ENCODE measurements at regions of chr12 and their contacts with region 1.

Region 1: GRCh38 chr12:49052451-49053208 is 8.0 kb downstream of the KMT2D start:
- DNase-seq: no peak
- ATAC-seq: no peak
- H3K4me3 ChIP-seq: no peak overlapping the region
- H3K27ac ChIP-seq: no peak overlapping the region
- H3K4me1 ChIP-seq: peaks cover 10% of the 10 kb centered on the region
- H3K27me3 ChIP-seq: no peaks in the 10 kb centered on the region

Region 2: GRCh38 chr12:48995061-48995879 is 57.4 kb before region 1 on chr12:
- intact Hi-C with region 1: no loop called
- DNase-seq: peak; percentile 82 to 93 (median 91)
- ATAC-seq: peak; percentile 73 to 74
- H3K4me3 ChIP-seq: peak overlapping the region; percentile 17
- H3K27ac ChIP-seq: no peak overlapping the region
- H3K4me1 ChIP-seq: peaks cover 7% of the 10 kb centered on the region
- H3K27me3 ChIP-seq: no peaks in the 10 kb centered on the region

Region 3: DNA sequence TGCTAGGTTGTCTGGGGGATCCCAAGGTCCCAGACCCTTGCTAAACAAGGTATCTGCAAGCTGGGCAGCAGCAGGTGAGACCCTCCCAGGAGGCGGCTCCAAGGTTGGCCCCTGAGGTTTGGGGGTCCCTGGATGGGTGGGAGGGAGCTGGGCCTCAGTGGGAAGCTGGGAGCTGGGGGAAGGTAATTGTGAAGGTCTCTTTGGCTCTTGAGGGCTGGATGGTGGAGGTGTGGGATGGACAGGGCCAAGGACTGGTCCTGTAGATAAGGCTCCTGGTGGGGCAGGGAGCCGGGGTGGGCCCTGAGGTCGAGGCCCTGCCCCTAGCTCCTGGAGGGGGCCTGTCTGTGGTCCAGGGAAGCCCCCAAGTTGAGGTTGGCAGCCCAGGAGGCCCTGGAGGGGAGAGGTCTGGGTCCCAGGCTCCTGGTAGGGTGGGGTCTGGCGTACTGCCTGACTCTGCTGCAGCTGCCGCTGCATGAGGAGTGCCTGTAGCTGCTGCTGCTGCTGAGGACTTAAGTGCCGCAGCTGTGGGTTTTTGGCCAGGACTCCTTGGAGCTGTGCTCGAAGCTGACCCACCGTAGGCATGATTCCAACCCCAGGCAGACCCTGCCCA is 21.0 kb before region 1 on chr12:
- intact Hi-C with region 1: loop called in 1 of 4 experiments (anchors 2 kb)
- DNase-seq: peak in 1 of 3 donors; percentile 49
- ATAC-seq: peak; percentile 5 to 17
- H3K4me3 ChIP-seq: no peak overlapping the region
- H3K27ac ChIP-seq: no peak overlapping the region
- H3K4me1 ChIP-seq: no peaks in the 10 kb centered on the region
- H3K27me3 ChIP-seq: no peaks in the 10 kb centered on the region